PC-9 (cell line): ENCODE measurements at regions of chr19 and their contacts with region 1.

Region 1: DNA sequence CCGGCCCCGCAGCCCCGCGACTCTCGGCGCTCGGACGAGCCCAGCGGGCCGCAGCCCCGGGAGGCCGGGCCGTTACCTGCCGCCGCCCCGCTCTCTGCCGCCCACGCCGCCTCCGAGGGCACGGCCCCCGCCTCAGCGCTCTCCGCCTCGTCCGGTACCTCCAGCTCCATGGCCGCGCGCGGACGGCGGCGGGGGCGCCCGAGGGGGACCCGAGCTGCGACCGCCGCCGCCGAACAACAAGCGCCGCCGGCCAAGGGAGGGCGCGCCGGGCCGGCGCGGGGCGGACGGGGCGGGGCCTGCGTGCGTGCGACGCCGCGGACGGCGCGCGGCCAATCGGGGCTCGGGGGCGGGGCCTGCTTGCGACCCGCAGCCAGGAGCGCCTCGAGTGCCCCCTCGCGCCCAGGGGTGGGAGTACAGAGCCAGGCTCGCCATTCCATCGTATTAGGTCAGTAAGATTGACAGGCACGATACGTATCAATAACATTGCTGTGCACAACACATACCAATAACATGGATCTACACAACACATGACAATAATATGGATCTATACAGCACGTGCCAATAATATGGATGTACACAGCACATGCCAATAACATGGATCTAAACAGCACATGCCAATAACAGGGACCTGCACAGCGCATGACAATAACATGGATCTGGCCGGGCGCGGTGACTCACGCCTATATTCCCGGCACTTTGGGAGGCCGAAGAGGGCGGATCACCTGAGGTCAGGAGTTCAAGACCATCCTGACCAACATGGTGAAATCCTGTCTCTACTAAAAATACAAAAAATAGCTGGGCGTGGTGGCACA is at the start of gene PIP5K1C:
- DNase-seq: peak; percentile 46 to 83
- H3K4me3 ChIP-seq: peak within 1 kb of the TSS; percentile 68
- H3K27ac ChIP-seq: no peak within 1 kb of the TSS
- H3K4me1 ChIP-seq: no peaks in the 10 kb centered on the region; the same call in 1 of the 2 replicates
- H3K27me3 ChIP-seq: no peaks in the 10 kb centered on the region
- CTCF ChIP-seq: peak; percentile 67
- total RNA-seq, gene PIP5K1C: 19.1 and 20.0 TPM in 2 replicates

Region 2: GRCh38 chr19:3655402-3656072 is 44.9 kb before region 1 on chr19:
- CTCF ChIA-PET with region 1: no interaction called
- POLR2A ChIA-PET with region 1: no interaction called
- intact Hi-C with region 1: no loop called
- DNase-seq: peak in 1 of 2 experiments; percentile 34
- H3K4me3 ChIP-seq: no peak overlapping the region
- H3K27ac ChIP-seq: no peak overlapping the region
- H3K4me1 ChIP-seq: no peaks in the 10 kb centered on the region
- H3K27me3 ChIP-seq: no peaks in the 10 kb centered on the region
- CTCF ChIP-seq: no peak

Region 3: GRCh38 chr19:3665681-3666544 is 34.5 kb before region 1 on chr19:
- CTCF ChIA-PET with region 1: interaction called, 16 read pairs
- POLR2A ChIA-PET with region 1: no interaction called
- intact Hi-C with region 1: no loop called
- DNase-seq: peak in 1 of 2 experiments; percentile 53
- H3K4me3 ChIP-seq: no peak overlapping the region
- H3K27ac ChIP-seq: no peak overlapping the region
- H3K4me1 ChIP-seq: no peaks in the 10 kb centered on the region
- H3K27me3 ChIP-seq: no peaks in the 10 kb centered on the region
- CTCF ChIP-seq: peak; percentile 93

Region 4: GRCh38 chr19:3893509-3894179 is 193.2 kb after region 1 on chr19:
- CTCF ChIA-PET with region 1: no interaction called
- POLR2A ChIA-PET with region 1: no interaction called
- intact Hi-C with region 1: no loop called
- DNase-seq: no peak
- H3K4me3 ChIP-seq: no peak overlapping the region
- H3K27ac ChIP-seq: no peak overlapping the region
- H3K4me1 ChIP-seq: no peaks in the 10 kb centered on the region
- H3K27me3 ChIP-seq: peaks cover 19% of the 10 kb centered on the region
- CTCF ChIP-seq: no peak